ENCODE measurements at regions of chr17 and their contacts with region 1.

Region 1: GRCh38 chr17:34398990-34399389 is 36.0 kb upstream of the CCL1 start:
- DNase-seq: peak in 2 of 3 donors; percentile 78 to 84
- H3K4me3 ChIP-seq: no peak overlapping the region
- H3K27ac ChIP-seq: no peak overlapping the region
- H3K4me1 ChIP-seq: peaks cover 8 to 26% (median 12%) of the 10 kb centered on the region in 4 experiments
- H3K27me3 ChIP-seq: peaks cover 0 to 3% (median 0%) of the 10 kb centered on the region in 5 experiments

Region 2: GRCh38 chr17:34110315-34110714 is 288.7 kb before region 1 on chr17:
- CTCF ChIA-PET with region 1: no interaction called
- POLR2A ChIA-PET with region 1: no interaction called
- DNase-seq: no peak
- H3K4me3 ChIP-seq: no peak overlapping the region
- H3K27ac ChIP-seq: no peak overlapping the region
- H3K4me1 ChIP-seq: no peaks in the 10 kb centered on the region
- H3K27me3 ChIP-seq: peaks cover 0 to 12% (median 0%) of the 10 kb centered on the region in 5 experiments

Region 3: DNA sequence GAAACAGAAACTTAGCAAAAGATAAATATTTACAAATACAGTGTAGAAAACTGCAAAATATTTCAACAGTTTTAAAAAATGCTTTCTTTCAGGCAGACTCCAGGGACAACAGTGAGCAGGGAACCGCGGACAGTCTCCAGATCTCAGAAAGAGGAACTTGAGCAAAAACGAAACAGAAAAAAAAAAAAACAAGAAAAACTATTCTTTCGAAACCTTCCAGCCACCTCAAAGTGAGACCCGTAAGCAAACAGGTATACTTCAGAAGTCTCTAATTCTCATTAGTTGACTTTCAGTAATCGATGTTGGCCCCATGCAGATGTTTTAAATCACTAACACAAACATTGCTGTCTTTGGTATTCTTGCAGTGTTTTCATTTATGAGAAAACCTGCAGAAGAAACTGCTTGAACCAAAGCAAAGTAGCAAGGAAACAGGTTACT is 20.3 kb before region 1 on chr17:
- CTCF ChIA-PET with region 1: interaction called, 40 read pairs
- POLR2A ChIA-PET with region 1: no interaction called
- DNase-seq: peak; percentile 77 to 90 (median 89)
- H3K4me3 ChIP-seq: peak overlapping the region in 4 of 7 experiments; percentile 40 to 45 (median 44)
- H3K27ac ChIP-seq: peak overlapping the region in 1 of 2 experiments; percentile 45
- H3K4me1 ChIP-seq: peaks cover 11 to 46% (median 33%) of the 10 kb centered on the region in 4 experiments
- H3K27me3 ChIP-seq: no peaks in the 10 kb centered on the region

Region 4: DNA sequence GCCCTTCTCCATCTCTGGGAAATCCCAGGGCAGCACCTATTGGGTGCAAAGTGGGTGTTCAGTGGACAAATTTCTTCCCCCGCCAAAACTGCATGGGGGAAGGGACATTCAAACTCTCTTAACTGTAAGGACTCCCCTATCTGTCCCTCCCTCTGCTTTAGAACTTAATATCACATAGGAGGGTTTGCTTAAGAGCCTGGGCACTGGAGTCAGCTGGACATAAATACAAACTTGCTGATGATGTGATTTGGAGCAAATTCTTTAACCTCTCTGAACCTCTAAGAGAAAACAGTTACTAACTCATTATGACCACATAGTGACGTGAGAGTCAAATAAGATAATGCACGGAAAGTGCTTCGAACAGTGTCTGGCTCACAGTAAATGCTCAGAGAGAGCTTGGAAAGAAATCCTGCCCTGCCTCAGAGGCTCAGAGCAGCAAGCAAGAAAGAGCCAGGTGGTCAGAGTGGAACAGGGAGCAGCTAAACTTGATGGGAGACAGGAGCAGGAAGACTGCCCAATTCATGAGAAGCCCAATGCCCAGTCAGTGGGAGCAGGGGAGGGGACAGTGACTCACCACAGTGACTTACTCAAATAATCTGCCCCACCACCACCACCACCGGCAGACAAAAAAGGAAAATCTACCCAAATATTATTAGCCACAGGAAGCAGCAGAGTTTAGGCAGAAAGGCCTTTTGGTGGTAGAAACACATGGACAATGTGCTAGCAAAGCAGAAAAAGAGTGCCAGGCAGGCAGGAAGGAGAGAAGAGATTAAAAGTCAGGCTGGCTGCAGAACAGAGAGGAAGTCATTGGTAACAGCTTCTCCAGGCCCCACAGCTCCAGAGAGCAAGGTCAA is 12.1 kb before region 1 on chr17:
- CTCF ChIA-PET with region 1: interaction called, 40 read pairs
- POLR2A ChIA-PET with region 1: interaction called, 4 read pairs
- DNase-seq: peak; percentile 44 to 92 (median 91)
- H3K4me3 ChIP-seq: no peak overlapping the region
- H3K27ac ChIP-seq: peak overlapping the region in 1 of 2 experiments; percentile 5
- H3K4me1 ChIP-seq: peaks cover 11 to 69% (median 65%) of the 10 kb centered on the region in 4 experiments
- H3K27me3 ChIP-seq: no peaks in the 10 kb centered on the region

Region 5: GRCh38 chr17:34499576-34499975 is 100.6 kb after region 1 on chr17:
- CTCF ChIA-PET with region 1: no interaction called
- POLR2A ChIA-PET with region 1: no interaction called
- DNase-seq: peak; percentile 27 to 58 (median 43)
- H3K4me3 ChIP-seq: no peak overlapping the region
- H3K27ac ChIP-seq: no peak overlapping the region
- H3K4me1 ChIP-seq: no peaks in the 10 kb centered on the region
- H3K27me3 ChIP-seq: peaks cover 0 to 26% (median 2%) of the 10 kb centered on the region in 5 experiments

Region 6: DNA sequence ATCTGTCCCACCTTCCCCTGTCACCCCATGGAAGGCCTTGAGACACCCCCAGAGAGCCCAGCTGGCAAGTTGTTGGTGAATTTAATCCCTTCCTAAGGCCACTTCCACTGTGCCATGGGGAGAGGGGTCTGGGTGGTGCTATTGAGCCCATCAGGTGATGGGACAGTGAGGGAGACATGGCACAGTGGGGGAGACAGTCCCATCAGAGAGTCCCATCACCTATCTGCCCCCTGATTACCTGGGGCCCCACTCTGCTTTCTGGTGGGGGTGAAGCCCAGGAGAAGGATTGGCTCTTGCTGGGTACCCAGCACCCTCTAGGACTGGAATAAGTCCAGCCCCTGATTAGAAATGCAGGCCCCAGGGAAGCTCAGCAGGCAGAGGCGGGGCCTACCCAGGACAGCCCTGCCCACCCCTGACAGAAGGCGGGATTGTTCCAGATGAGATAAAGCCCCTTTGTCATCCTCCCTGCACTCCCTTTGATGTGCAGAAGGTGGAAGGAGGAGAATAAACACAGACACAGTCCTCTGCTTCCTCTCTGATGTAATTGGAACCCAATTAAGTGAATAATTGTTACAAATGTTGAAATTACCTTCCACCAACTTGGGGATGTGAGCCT is 199.3 kb after region 1 on chr17:
- CTCF ChIA-PET with region 1: no interaction called
- POLR2A ChIA-PET with region 1: no interaction called
- DNase-seq: no peak
- H3K4me3 ChIP-seq: no peak overlapping the region
- H3K27ac ChIP-seq: no peak overlapping the region
- H3K4me1 ChIP-seq: no peaks in the 10 kb centered on the region
- H3K27me3 ChIP-seq: peaks cover 0 to 34% (median 13%) of the 10 kb centered on the region in 5 experiments